WTC11 (cell line): ENCODE measurements at regions of chr9 and their contacts with region 1.

Region 1: DNA sequence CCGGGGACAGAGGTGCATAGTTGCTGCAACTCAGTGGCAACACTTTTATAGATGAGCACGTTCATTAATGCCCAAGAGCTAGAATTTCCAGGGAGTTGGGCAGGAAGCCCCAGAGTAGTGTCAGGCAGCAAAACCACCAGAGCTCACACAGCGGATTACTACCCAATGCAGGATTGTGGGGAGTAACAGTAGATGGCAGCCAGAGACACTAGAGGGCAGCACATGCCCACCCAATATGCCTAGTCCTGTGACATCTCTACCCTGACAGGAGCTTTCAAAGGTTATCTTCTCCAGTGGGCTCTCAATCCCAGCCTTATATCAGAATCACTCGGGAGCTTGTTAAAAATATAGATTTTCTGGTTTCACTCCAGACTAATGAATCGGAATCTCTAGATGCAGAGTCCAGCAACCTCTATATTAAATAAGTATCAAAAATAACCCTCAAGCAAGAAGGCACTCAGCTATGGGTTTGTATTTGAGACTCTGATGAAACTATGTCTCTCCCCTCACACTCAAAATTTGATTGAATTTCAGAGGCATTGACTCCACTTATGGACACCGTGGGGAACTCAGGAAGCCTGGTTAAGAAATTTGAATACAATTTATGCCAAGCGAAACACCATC is 58.4 kb upstream of the PHF24 start:
- DNase-seq: peak; percentile 83
- ATAC-seq: peak; percentile 100
- H3K4me3 Mint-ChIP-seq: no peak overlapping the region
- H3K27ac Mint-ChIP-seq: no peak overlapping the region
- H3K4me1 Mint-ChIP-seq: peaks cover 2% of the 10 kb centered on the region
- H3K27me3 Mint-ChIP-seq: peaks cover 25% of the 10 kb centered on the region
- CTCF ChIP-seq: peak; percentile 72

Region 2: GRCh38 chr9:34796924-34797323 is 102.7 kb before region 1 on chr9:
- CTCF ChIA-PET with region 1: no interaction called
- POLR2A ChIA-PET with region 1: no interaction called
- DNase-seq: peak; percentile 54
- ATAC-seq: peak; percentile 78
- H3K4me3 Mint-ChIP-seq: no peak overlapping the region; the same call in 1 of the 2 replicates
- H3K27ac Mint-ChIP-seq: no peak overlapping the region
- H3K4me1 Mint-ChIP-seq: peaks cover 14% of the 10 kb centered on the region
- H3K27me3 Mint-ChIP-seq: peaks cover 23% of the 10 kb centered on the region
- CTCF ChIP-seq: no peak

Region 3: GRCh38 chr9:34823786-34824185 is 75.9 kb before region 1 on chr9:
- CTCF ChIA-PET with region 1: no interaction called
- POLR2A ChIA-PET with region 1: no interaction called
- DNase-seq: no peak
- ATAC-seq: no peak
- H3K4me3 Mint-ChIP-seq: no peak overlapping the region
- H3K27ac Mint-ChIP-seq: no peak overlapping the region
- H3K4me1 Mint-ChIP-seq: no peaks in the 10 kb centered on the region
- H3K27me3 Mint-ChIP-seq: peaks cover 11% of the 10 kb centered on the region
- CTCF ChIP-seq: no peak

Region 4: DNA sequence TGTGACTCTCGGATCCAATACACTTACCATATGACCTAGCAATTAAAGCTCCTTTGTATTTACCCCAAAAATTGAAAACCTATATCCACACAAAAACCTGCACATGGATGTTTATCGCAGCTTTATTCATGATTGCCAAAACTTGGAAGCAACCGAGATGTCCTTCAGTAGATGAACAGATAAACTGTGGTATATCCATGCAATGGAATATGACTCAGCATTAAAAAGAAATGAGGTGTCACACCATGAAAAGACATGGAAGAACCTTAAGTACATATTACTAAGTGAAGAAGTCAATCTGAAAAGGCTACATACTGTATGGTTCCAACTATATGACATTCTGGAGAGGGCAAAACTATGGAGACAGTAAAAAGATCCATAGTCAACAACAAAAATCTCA is 23.6 kb before region 1 on chr9:
- CTCF ChIA-PET with region 1: no interaction called
- POLR2A ChIA-PET with region 1: no interaction called
- DNase-seq: no peak
- ATAC-seq: no peak
- H3K4me3 Mint-ChIP-seq: no peak overlapping the region
- H3K27ac Mint-ChIP-seq: no peak overlapping the region
- H3K4me1 Mint-ChIP-seq: no peaks in the 10 kb centered on the region
- H3K27me3 Mint-ChIP-seq: peaks cover 29% of the 10 kb centered on the region
- CTCF ChIP-seq: no peak

Region 5: GRCh38 chr9:34929506-34930102 is 30.0 kb after region 1 on chr9:
- CTCF ChIA-PET with region 1: interaction called, 20 read pairs
- POLR2A ChIA-PET with region 1: no interaction called
- DNase-seq: peak; percentile 68
- ATAC-seq: peak; percentile 97
- H3K4me3 Mint-ChIP-seq: no peak overlapping the region
- H3K27ac Mint-ChIP-seq: no peak overlapping the region
- H3K4me1 Mint-ChIP-seq: no peaks in the 10 kb centered on the region; the same call in 1 of the 2 replicates
- H3K27me3 Mint-ChIP-seq: peaks cover 5% of the 10 kb centered on the region
- CTCF ChIP-seq: peak; percentile 63

Region 6: GRCh38 chr9:34989003-34989945 is 89.6 kb after region 1 on chr9 and contains the start of gene DNAJB5:
- CTCF ChIA-PET with region 1: interaction called, 202 read pairs
- POLR2A ChIA-PET with region 1: interaction called, 8 read pairs
- DNase-seq: peak; percentile 98
- ATAC-seq: peak; percentile 85
- H3K4me3 Mint-ChIP-seq: peak within 1 kb of the TSS; percentile 82
- H3K27ac Mint-ChIP-seq: peak within 1 kb of the TSS; percentile 98
- H3K4me1 Mint-ChIP-seq: peaks cover 60% of the 10 kb centered on the region
- H3K27me3 Mint-ChIP-seq: peaks cover 4% of the 10 kb centered on the region
- CTCF ChIP-seq: no peak
- total RNA-seq, gene DNAJB5: 26.7 to 30.0 TPM (median 28.6 TPM) in 3 replicates

Region 7: GRCh38 chr9:35051069-35051967 is 151.7 kb after region 1 on chr9:
- CTCF ChIA-PET with region 1: interaction called, 106 read pairs
- POLR2A ChIA-PET with region 1: interaction called, 3 read pairs
- DNase-seq: peak; percentile 71
- ATAC-seq: peak; percentile 84
- H3K4me3 Mint-ChIP-seq: no peak overlapping the region
- H3K27ac Mint-ChIP-seq: peak overlapping the region; percentile 54
- H3K4me1 Mint-ChIP-seq: peaks cover 3% of the 10 kb centered on the region; the same call in 1 of the 2 replicates
- H3K27me3 Mint-ChIP-seq: no peaks in the 10 kb centered on the region
- CTCF ChIP-seq: peak; percentile 68

Region 8: DNA sequence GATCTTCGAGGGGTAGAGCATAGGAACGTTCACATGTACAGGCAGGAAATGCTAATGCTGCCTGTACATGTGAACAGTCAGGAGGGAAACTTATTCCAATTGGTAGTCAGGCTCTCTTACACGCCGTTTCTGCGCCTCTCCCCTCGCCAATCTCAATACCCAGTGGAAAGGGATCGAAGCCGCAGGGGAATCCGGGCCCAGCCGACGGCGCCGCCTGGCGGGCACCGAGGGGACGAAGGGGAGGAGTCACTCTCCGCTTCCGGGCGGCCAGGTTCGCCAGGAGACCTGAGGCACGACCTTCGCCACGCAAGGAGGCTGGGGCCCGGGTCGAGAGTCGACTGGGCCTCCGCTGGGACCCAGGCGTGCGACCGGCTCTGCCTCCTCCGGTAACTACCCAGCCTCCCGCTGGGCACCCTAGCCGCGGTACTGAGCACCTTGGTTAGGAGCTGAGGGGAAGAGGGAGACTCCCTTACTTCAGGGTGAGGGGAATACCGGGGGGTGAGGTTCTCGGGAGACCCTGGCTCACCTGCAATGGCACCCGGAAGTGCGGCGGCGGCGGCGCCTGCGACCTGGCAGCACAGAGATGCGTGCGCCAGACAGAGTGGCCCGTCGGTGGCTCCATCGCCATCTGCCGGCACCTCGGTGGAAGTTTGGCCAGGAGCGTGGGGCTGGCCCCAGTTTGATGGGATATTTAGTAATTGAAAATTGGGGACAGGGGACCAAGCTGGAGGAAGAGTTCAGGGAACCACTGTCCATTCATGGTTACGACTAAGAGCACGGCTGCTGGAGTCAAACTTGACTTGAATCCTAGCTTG is 196.6 kb after region 1 on chr9 and contains the start of gene PIGO:
- CTCF ChIA-PET with region 1: interaction called, 17 read pairs
- POLR2A ChIA-PET with region 1: no interaction called
- DNase-seq: peak; percentile 91
- ATAC-seq: peak; percentile 91
- H3K4me3 Mint-ChIP-seq: peak within 1 kb of the TSS; percentile 85
- H3K27ac Mint-ChIP-seq: peak within 1 kb of the TSS; percentile 92
- H3K4me1 Mint-ChIP-seq: no peaks in the 10 kb centered on the region
- H3K27me3 Mint-ChIP-seq: no peaks in the 10 kb centered on the region
- CTCF ChIP-seq: peak; percentile 64
- total RNA-seq, gene PIGO: 23.8 to 33.3 TPM (median 31.3 TPM) in 3 replicates